Activated T-helper 1 cell treated with anti-CD3 and anti-CD28 coated beads, Interleukin-12 subunit alpha, Interleukin-12 subunit beta, Interleukin-2, Interleukin-4 antibody, amounts not matched to agents 30 ng/mL and 10 ng/mL and 1 ng/mL, durations not matched to agents 14 hours and 24 hours and 36 hours (primary cell): ENCODE measurements at regions of chr9 and their contacts with region 1.

Region 1: DNA sequence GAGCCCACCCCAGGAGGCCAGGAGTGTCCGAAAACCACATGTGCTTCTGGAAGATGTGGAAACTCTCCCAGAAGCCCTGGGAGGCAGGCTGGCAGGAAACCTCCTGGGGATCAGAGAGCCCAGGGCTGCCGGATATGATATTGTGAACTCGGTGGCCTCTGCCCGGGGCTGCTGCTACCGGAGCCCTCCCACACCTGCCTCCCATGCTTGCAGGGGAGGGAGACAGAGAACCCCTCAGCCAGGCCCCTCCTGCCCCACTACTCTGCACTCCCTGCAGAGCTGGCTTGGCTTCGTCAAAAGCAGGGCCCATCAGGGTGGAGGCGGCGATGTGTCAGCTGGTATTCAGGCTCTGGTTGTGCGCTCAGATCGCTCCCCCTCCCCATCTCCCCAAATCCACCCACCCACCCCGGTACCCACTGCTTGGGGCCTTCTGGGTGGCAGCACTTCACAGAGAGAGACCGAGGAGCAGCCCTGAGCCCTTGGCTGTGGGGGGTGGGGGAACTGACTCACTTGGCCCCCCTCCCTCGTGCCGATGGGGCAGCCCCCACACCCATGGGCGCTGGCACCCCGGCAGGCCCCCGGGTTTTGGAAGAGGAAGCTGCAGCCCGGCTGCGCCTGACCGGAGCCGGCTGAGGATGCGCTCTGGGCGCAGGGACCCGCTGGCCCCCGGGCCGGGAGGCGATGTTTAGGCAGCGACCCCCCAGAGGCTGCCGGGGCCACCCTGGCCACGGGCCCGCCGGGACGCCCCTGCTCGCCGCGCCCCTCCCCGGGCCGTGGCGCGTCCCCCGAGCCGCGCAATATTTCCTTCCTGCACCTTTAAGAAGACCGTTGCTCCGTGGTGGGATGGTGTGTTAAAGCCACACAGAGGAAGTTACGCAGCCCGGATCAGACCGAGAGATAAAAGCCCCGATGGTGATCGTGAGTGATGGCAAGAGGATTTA is 786 bp upstream of the NTNG2 start:
- DNase-seq: peak; percentile 57
- H3K4me3 Mint-ChIP-seq: peak overlapping the region; percentile 98
- H3K27ac Mint-ChIP-seq: peak overlapping the region; percentile 97
- H3K4me1 Mint-ChIP-seq: peaks cover 19% of the 10 kb centered on the region
- H3K27me3 Mint-ChIP-seq: peaks cover 56% of the 10 kb centered on the region

Region 2: DNA sequence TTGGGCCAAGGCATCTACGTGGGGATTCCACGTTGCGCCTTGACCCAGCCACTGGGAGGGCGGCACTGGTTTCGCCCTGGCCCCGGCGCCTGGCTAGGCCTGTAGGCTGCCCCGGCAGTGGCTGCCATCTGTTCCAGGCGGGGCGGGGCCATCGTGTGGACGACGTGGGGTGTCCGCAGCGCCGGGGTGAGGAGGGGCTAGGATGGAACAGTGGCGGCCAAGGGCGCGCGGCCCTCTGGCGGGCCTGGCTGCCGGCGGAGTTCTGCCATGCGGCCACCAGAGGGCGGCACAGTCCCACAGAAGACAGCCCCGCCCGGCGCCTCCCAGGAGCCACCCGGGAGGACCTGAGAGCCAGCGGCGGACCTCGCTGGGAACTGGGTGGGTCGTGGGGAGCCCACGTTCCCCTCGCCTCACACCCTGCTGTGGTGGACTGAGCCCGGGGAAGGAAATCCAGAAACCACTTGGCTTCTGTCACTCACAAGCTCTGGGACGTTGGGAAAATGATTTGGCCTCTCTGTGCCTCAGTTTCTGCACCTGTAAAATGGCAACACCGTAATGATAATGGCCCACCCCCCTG is 398.6 kb before region 1 on chr9:
- intact Hi-C with region 1: loop called (anchors 2 kb)
- DNase-seq: peak; percentile 62
- H3K4me3 Mint-ChIP-seq: no peak overlapping the region
- H3K27ac Mint-ChIP-seq: no peak overlapping the region
- H3K4me1 Mint-ChIP-seq: peaks cover 12% of the 10 kb centered on the region
- H3K27me3 Mint-ChIP-seq: peaks cover 35% of the 10 kb centered on the region

Region 3: DNA sequence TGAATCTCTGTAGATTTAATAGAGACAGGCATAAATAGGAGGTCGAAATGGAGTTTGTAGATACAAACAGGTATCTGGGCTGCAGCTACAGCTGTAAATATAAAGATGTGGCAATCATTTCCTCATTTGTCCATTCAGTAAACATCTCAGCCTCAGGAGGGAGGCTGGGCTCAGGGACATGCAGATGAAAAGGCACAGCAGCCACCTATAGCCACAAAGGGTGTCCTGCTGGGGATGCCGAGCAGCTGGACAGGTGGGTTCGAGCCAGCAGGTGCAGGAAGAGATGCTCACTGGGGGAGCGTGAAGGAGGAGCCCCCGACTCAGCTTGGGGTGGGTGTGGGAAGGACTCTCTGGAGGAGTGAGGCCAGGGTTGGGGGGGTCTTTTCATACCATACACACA is 372.7 kb before region 1 on chr9:
- intact Hi-C with region 1: no loop called
- DNase-seq: no peak
- H3K4me3 Mint-ChIP-seq: no peak overlapping the region
- H3K27ac Mint-ChIP-seq: no peak overlapping the region
- H3K4me1 Mint-ChIP-seq: no peaks in the 10 kb centered on the region
- H3K27me3 Mint-ChIP-seq: peaks cover 7% of the 10 kb centered on the region

Region 4: DNA sequence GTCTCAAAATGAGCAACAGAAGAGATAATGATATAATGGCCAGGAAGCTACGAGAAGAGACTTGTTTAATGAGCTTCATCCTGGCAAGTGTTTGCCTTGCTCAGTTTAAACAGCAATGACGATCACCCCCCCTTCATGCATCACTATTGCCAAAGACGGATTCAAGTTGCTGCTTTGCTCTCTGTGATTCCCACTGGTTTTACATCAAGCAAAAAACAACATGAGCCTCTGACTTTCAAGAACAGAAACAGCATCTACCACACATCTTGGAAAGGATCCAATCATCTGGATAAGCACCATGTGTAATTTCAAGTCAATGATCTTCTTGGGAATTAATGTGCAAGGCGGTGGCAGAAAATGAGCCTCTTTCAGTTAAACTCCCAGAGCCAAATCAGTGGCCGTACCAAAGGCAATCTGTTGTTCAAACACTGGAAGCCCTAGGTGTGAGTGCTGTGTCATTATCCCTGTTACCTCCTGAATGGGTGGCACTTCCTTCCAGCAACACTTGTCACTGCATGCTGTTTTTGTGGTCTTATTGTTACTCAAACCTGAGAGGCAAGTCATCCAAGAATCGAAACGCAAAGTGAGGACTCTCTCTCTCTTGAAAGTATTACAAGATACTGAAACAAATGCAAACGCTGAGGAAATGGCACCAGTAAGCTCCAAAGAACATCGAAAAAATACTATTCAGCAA is 154.2 kb before region 1 on chr9:
- intact Hi-C with region 1: loop called (anchors 2 kb)
- DNase-seq: peak; percentile 50
- H3K4me3 Mint-ChIP-seq: peak overlapping the region; percentile 58
- H3K27ac Mint-ChIP-seq: peak overlapping the region; percentile 62
- H3K4me1 Mint-ChIP-seq: peaks cover 66% of the 10 kb centered on the region
- H3K27me3 Mint-ChIP-seq: peaks cover 2% of the 10 kb centered on the region

Region 5: GRCh38 chr9:132125944-132126720 is 34.9 kb before region 1 on chr9:
- intact Hi-C with region 1: loop called (anchors 5 kb)
- DNase-seq: no peak
- H3K4me3 Mint-ChIP-seq: peak overlapping the region; percentile 72
- H3K27ac Mint-ChIP-seq: peak overlapping the region; percentile 45
- H3K4me1 Mint-ChIP-seq: peaks cover 10% of the 10 kb centered on the region
- H3K27me3 Mint-ChIP-seq: peaks cover 31% of the 10 kb centered on the region

Region 6: DNA sequence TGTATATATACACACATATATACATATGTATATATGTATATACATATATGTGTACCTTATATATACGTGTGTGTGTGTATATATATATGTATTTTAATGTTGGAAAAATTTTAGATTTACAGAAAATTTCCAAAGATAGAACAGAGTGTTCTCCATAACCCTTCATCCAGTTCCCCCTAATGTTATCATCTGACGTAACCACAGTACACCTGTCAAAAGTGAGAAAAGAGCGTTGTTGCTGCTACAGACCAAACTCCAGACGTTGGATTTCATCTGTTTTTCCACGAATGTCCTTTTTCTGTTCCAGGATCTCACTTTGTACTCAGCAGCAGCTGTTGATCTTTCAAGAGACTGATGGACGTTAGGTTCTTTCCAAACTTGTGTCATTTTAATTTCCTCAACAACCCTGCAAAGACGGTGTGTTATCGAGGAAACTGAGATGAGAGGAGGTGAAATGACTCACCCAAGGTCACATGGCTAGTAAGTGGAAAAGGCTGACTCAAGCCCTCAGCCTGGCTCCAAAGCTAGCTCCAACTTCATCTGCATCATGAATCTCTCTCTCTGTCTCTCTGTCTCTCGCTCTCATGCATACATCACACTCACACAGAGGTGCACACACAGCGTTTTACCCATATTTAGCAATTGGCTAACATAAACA is 16.2 kb before region 1 on chr9:
- intact Hi-C with region 1: loop called (anchors 1 kb)
- DNase-seq: peak; percentile 28
- H3K4me3 Mint-ChIP-seq: peak overlapping the region; percentile 19
- H3K27ac Mint-ChIP-seq: peak overlapping the region; percentile 78
- H3K4me1 Mint-ChIP-seq: peaks cover 38% of the 10 kb centered on the region
- H3K27me3 Mint-ChIP-seq: peaks cover 53% of the 10 kb centered on the region

Region 7: GRCh38 chr9:132240753-132241493 is 79.9 kb after region 1 on chr9:
- intact Hi-C with region 1: loop called (anchors 2 kb)
- DNase-seq: peak; percentile 98
- H3K4me3 Mint-ChIP-seq: peak overlapping the region; percentile 94
- H3K27ac Mint-ChIP-seq: peak overlapping the region; percentile 78
- H3K4me1 Mint-ChIP-seq: peaks cover 15% of the 10 kb centered on the region
- H3K27me3 Mint-ChIP-seq: peaks cover 8% of the 10 kb centered on the region

Region 8: DNA sequence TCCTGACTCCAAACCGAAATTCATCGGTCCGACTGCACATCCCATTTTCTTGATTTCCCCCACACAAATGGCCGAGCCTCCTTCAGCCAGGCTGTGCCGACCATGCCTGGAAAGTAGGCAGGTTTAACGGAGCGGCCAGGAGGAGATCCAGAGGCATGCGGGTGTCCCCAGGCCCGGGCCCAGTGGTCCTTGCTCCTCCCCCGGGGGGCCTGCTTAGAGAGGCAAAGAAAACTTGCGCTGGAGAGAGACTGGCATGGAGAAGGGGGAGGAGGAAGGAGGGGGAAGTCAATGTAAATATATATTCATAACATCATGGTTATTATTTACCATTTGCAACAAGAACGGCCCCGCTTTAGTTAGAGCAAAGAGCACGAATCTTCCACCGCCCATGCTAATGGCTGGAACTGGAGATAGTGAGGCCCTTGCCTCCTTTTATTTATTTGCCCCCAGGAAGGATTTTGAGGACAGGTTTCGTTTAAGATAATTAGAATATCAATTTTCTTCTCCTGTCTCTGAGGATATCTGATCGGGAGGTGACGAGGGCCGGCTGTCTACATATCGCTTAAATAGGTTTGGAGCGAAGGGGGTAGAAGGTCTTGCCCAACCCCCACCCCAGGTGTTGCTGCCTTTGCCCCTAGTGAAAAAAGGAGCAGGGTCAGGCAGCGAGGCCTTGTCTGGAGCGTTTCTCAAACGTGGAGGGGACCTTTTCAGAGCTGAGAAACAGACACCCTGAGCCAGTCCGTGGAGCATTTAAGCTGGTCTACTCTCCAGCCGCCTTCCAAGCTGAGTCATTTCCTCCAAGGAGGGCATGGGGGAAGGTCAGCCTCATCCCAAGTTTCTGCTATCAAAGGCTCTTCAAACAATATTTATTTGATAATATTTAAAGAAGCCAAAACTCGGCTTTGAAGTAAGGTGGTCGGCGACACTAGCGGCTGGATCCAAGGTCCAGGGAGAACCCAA is 423.8 kb after region 1 on chr9:
- intact Hi-C with region 1: loop called (anchors 5 kb)
- DNase-seq: no peak
- H3K4me3 Mint-ChIP-seq: no peak overlapping the region
- H3K27ac Mint-ChIP-seq: no peak overlapping the region
- H3K4me1 Mint-ChIP-seq: peaks cover 8% of the 10 kb centered on the region
- H3K27me3 Mint-ChIP-seq: peaks cover 72% of the 10 kb centered on the region